ENCODE measurements at regions of chr7 and their contacts with region 1.

Region 1: GRCh38 chr7:66628361-66629140 is at the start of gene KCTD7:
- DNase-seq: peak; percentile 99 to 100 (median 99)
- ATAC-seq: peak; percentile 94 to 97 (median 96)
- H3K4me3 ChIP-seq: peak within 1 kb of the TSS; percentile 59 to 99 (median 73)
- H3K27ac ChIP-seq: peak within 1 kb of the TSS; percentile 89 to 100 (median 94)
- H3K4me1 ChIP-seq: peaks cover 0 to 43% (median 16%) of the 10 kb centered on the region in 12 donors
- H3K27me3 ChIP-seq: no peaks in the 10 kb centered on the region
- CTCF ChIP-seq: peak in 1 of 12 donors; percentile 16
- POLR2A ChIP-seq: peak; percentile 91 to 98
- total RNA-seq, gene KCTD7: 4.1 to 13.9 (median 11.0) TPM

Region 2: DNA sequence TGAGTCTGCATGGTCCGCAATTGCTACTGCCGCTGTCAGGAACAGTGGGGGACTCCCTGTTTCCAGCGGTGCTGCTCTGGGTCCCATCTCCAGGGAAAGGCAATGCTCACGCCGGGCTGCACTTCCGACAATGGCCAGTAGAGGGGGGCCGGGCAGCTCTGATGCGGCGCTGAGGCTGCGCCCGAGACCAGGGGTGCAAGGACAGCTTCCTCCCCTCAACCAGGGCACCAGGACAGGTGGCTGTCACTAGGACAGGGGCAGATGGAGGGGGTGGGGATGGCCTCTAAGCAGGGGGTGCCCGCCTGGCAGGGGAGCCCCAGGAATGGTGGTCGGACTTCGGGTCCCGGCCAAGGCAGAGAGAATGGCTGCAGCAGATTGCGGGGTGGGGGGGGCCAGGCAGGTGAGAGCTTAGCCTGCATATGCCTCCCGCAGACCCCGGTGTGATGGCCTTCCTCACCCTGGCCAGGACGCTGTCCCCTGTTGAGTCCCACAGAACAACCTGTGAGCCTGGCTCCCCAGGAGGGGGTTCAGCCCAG is 70.9 kb before region 1 on chr7:
- intact Hi-C with region 1: loop called in 1 of 10 experiments (anchors 1 kb)
- DNase-seq: peak; percentile 54 to 84 (median 69)
- ATAC-seq: peak; percentile 48 to 85 (median 78)
- H3K4me3 ChIP-seq: peak overlapping the region in 1 of 12 donors; percentile 24
- H3K27ac ChIP-seq: no peak overlapping the region
- H3K4me1 ChIP-seq: peaks cover 0 to 8% (median 0%) of the 10 kb centered on the region in 12 donors
- H3K27me3 ChIP-seq: no peaks in the 10 kb centered on the region
- CTCF ChIP-seq: peak; percentile 88 to 97 (median 92)
- POLR2A ChIP-seq: no peak

Region 3: GRCh38 chr7:66591799-66592596 is 36.6 kb before region 1 on chr7:
- intact Hi-C with region 1: loop called in 4 of 10 experiments (anchors 1 to 5 kb)
- DNase-seq: peak; percentile 91 to 95 (median 94)
- ATAC-seq: peak; percentile 90 to 98 (median 98)
- H3K4me3 ChIP-seq: peak overlapping the region; percentile 57 to 98 (median 91)
- H3K27ac ChIP-seq: peak overlapping the region; percentile 82 to 97 (median 93)
- H3K4me1 ChIP-seq: peaks cover 0 to 42% (median 23%) of the 10 kb centered on the region in 12 donors
- H3K27me3 ChIP-seq: no peaks in the 10 kb centered on the region
- CTCF ChIP-seq: no peak
- POLR2A ChIP-seq: peak in 1 of 2 donors; percentile 90

Region 4: DNA sequence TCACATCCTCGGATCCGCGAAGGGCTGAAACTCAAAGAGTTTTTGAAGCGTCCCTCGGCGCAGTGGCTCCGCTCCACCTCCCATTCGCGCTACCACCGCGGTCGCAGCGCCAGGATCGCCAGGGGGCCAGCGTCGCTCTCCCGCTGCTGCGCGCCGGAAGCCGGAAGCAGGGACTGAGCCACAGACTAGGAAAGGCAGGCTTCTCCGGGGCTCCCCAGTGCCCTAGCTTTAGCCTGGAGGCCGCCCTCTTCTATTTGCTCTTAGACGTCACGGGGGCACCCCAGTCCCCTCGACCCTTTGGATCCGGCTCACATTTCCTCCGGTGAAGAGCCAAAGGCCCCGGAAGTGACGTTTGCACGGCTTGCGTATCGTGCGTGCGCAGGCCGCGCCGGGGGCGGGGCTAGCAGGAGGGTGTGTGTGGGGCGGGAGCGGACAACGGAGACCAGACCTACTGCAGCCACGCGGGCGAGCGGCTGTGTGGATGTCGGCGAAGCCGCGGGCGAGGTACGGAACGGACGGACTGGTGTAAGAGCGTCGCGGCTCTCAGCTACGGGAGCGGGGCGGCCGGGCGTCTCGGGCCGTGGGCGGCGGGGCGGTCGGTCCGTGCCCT is 25.7 kb after region 1 on chr7:
- intact Hi-C with region 1: loop called in 4 of 10 experiments (anchors 1 to 2 kb)
- DNase-seq: peak; percentile 97 to 99 (median 98)
- ATAC-seq: peak; percentile 98 to 99 (median 98)
- H3K4me3 ChIP-seq: peak overlapping the region; percentile 53 to 98 (median 78)
- H3K27ac ChIP-seq: peak overlapping the region; percentile 90 to 100 (median 98)
- H3K4me1 ChIP-seq: peaks cover 0 to 23% (median 11%) of the 10 kb centered on the region in 12 donors
- H3K27me3 ChIP-seq: no peaks in the 10 kb centered on the region
- CTCF ChIP-seq: peak in 8 of 12 donors; percentile 14 to 52 (median 37)
- POLR2A ChIP-seq: peak; percentile 69 to 97

Measured in heart left ventricle (tissue), 16 donors.